B cell (primary cell): ENCODE measurements at regions of chr14 and their contacts with region 1.

Region 1: GRCh38 chr14:73058224-73058921 is at the start of gene RBM25:
- DNase-seq: peak; percentile 98
- ATAC-seq: peak; percentile 94
- H3K4me3 ChIP-seq: peak within 1 kb of the TSS; percentile 77 to 94 (median 84)
- H3K4me3 Mint-ChIP-seq: no peak within 1 kb of the TSS
- H3K27ac ChIP-seq: peak within 1 kb of the TSS; percentile 84 to 91
- H3K27ac Mint-ChIP-seq: no peak within 1 kb of the TSS
- H3K4me1 ChIP-seq: peaks cover 25 to 28% of the 10 kb centered on the region in 2 donors
- H3K4me1 Mint-ChIP-seq: peaks cover 39% of the 10 kb centered on the region
- H3K27me3 ChIP-seq: no peaks in the 10 kb centered on the region
- H3K27me3 Mint-ChIP-seq: no peaks in the 10 kb centered on the region
- CTCF ChIP-seq: no peak
- total RNA-seq, gene RBM25: 137 and 151 TPM in 2 replicates

Region 2: GRCh38 chr14:72926292-72927028 is 131.9 kb before region 1 on chr14 and contains the start of gene DCAF4:
- CTCF ChIA-PET with region 1: no interaction called
- POLR2A ChIA-PET with region 1: no interaction called
- intact Hi-C with region 1: loop called (anchors 2 kb)
- DNase-seq: peak; percentile 97
- ATAC-seq: peak; percentile 91
- H3K4me3 ChIP-seq: peak within 1 kb of the TSS; percentile 55 to 87 (median 70)
- H3K4me3 Mint-ChIP-seq: peak within 1 kb of the TSS; percentile 99
- H3K27ac ChIP-seq: peak within 1 kb of the TSS; percentile 66 to 89
- H3K27ac Mint-ChIP-seq: peak within 1 kb of the TSS; percentile 95
- H3K4me1 ChIP-seq: peaks cover 10 to 23% of the 10 kb centered on the region in 2 donors
- H3K4me1 Mint-ChIP-seq: peaks cover 15% of the 10 kb centered on the region
- H3K27me3 ChIP-seq: no peaks in the 10 kb centered on the region
- H3K27me3 Mint-ChIP-seq: peaks cover 7% of the 10 kb centered on the region
- CTCF ChIP-seq: no peak
- total RNA-seq, gene DCAF4: 35.3 and 36.2 TPM in 2 replicates

Region 3: GRCh38 chr14:73026845-73027542 is 31.4 kb before region 1 on chr14 and contains the start of gene ZFYVE1:
- CTCF ChIA-PET with region 1: interaction called, 8 read pairs
- POLR2A ChIA-PET with region 1: interaction called, 12 read pairs
- intact Hi-C with region 1: loop called (anchors 1 kb)
- DNase-seq: peak; percentile 92
- ATAC-seq: peak; percentile 99
- H3K4me3 ChIP-seq: peak within 1 kb of the TSS; percentile 69 to 97 (median 95)
- H3K4me3 Mint-ChIP-seq: peak within 1 kb of the TSS; percentile 96
- H3K27ac ChIP-seq: peak within 1 kb of the TSS in 1 of 2 donors; percentile 71
- H3K27ac Mint-ChIP-seq: peak within 1 kb of the TSS; percentile 94
- H3K4me1 ChIP-seq: peaks cover 16 to 18% of the 10 kb centered on the region in 2 donors
- H3K4me1 Mint-ChIP-seq: peaks cover 38% of the 10 kb centered on the region
- H3K27me3 ChIP-seq: no peaks in the 10 kb centered on the region
- H3K27me3 Mint-ChIP-seq: no peaks in the 10 kb centered on the region
- CTCF ChIP-seq: no peak
- total RNA-seq, gene ZFYVE1: 21.2 and 22.3 TPM in 2 replicates

Region 4: DNA sequence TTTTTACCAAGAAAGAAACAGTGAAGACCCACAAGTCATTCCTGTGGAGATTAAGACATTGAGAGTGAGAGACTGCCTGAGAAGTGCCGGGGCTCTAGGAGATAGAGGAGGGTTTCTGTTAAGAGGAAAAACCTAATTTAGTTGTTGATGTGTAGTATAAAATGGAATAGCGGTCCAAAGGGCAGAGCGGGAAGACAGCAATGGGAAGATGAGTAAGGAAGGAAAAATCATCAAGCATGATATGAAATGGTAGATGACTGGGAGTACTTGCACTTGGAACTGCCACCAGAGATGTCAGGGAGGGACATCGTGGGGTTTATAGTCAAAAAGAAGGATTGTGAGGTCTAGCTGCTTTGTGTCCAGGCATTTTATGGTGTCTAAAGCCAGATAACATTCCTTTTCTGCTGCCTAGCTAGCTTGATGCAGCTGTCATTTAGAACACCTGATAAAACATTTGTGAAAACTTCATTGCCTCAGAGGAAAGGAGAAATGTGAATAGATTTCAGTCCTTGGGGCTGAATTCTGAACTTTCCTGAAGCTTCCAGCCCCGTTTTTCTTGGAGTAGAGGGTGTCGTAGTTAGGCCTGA is 57.8 kb after region 1 on chr14:
- CTCF ChIA-PET with region 1: no interaction called
- POLR2A ChIA-PET with region 1: no interaction called
- intact Hi-C with region 1: no loop called
- DNase-seq: no peak
- ATAC-seq: no peak
- H3K4me3 ChIP-seq: no peak overlapping the region
- H3K4me3 Mint-ChIP-seq: no peak overlapping the region
- H3K27ac ChIP-seq: no peak overlapping the region
- H3K27ac Mint-ChIP-seq: no peak overlapping the region
- H3K4me1 ChIP-seq: no peaks in the 10 kb centered on the region
- H3K4me1 Mint-ChIP-seq: no peaks in the 10 kb centered on the region
- H3K27me3 ChIP-seq: no peaks in the 10 kb centered on the region
- H3K27me3 Mint-ChIP-seq: no peaks in the 10 kb centered on the region
- CTCF ChIP-seq: no peak

Region 5: GRCh38 chr14:73245401-73246325 is 187.3 kb after region 1 on chr14:
- CTCF ChIA-PET with region 1: no interaction called
- POLR2A ChIA-PET with region 1: interaction called, 15 read pairs
- intact Hi-C with region 1: no loop called
- DNase-seq: peak; percentile 82
- ATAC-seq: peak; percentile 84
- H3K4me3 ChIP-seq: peak overlapping the region in 4 of 5 experiments; percentile 63 to 70 (median 66)
- H3K4me3 Mint-ChIP-seq: peak overlapping the region; percentile 75
- H3K27ac ChIP-seq: peak overlapping the region in 1 of 2 donors; percentile 29
- H3K27ac Mint-ChIP-seq: no peak overlapping the region
- H3K4me1 ChIP-seq: peaks cover 58 to 73% of the 10 kb centered on the region in 2 donors
- H3K4me1 Mint-ChIP-seq: peaks cover 71% of the 10 kb centered on the region
- H3K27me3 ChIP-seq: peaks cover 0 to 26% (median 9%) of the 10 kb centered on the region in 4 experiments
- H3K27me3 Mint-ChIP-seq: peaks cover 23% of the 10 kb centered on the region
- CTCF ChIP-seq: no peak